ENCODE measurements at regions of chr11 and their contacts with region 1.

Region 1: GRCh38 chr11:77820563-77821348 is at the starts of genes AAMDC and RSF1:
- DNase-seq: peak; percentile 97 to 99
- H3K4me3 ChIP-seq: peak within 1 kb of the TSS; percentile 91 to 100
- H3K27ac ChIP-seq: peak within 1 kb of the TSS; percentile 93 to 98
- H3K4me1 ChIP-seq: peaks cover 8 to 10% of the 10 kb centered on the region in 2 donors
- H3K27me3 ChIP-seq: no peaks in the 10 kb centered on the region
- CTCF ChIP-seq: peak; percentile 73 to 84 (median 76)
- POLR2A ChIP-seq: peak; percentile 79 to 93
- total RNA-seq, gene AAMDC: 10.9 to 31.5 (median 28.1) TPM
- total RNA-seq, gene RSF1: 26.5 to 121 (median 82.3) TPM

Region 2: GRCh38 chr11:77879218-77879617 is 58.5 kb after region 1 on chr11:
- intact Hi-C with region 1: no loop called
- DNase-seq: peak; percentile 47 to 57
- H3K4me3 ChIP-seq: no peak overlapping the region
- H3K27ac ChIP-seq: no peak overlapping the region
- H3K4me1 ChIP-seq: no peaks in the 10 kb centered on the region
- H3K27me3 ChIP-seq: no peaks in the 10 kb centered on the region
- CTCF ChIP-seq: peak in 1 of 4 experiments; percentile 6
- POLR2A ChIP-seq: no peak

Region 3: GRCh38 chr11:77994412-77995362 is 173.9 kb after region 1 on chr11 and contains the start of gene INTS4:
- intact Hi-C with region 1: loop called (anchors 5 kb)
- DNase-seq: peak; percentile 99
- H3K4me3 ChIP-seq: peak within 1 kb of the TSS; percentile 53 to 79
- H3K27ac ChIP-seq: peak within 1 kb of the TSS; percentile 80 to 85
- H3K4me1 ChIP-seq: no peaks in the 10 kb centered on the region
- H3K27me3 ChIP-seq: no peaks in the 10 kb centered on the region
- CTCF ChIP-seq: peak in 2 of 4 experiments; percentile 15 to 29
- POLR2A ChIP-seq: peak in 1 of 2 donors; percentile 46
- total RNA-seq, gene INTS4: 13.8 to 68.8 (median 45.7) TPM

Region 4: GRCh38 chr11:78350646-78351165 is 530.0 kb after region 1 on chr11:
- intact Hi-C with region 1: no loop called
- DNase-seq: no peak
- H3K4me3 ChIP-seq: peak overlapping the region in 1 of 2 donors; percentile 25
- H3K27ac ChIP-seq: peak overlapping the region; percentile 53 to 80
- H3K4me1 ChIP-seq: peaks cover 1 to 9% of the 10 kb centered on the region in 2 donors
- H3K27me3 ChIP-seq: no peaks in the 10 kb centered on the region
- CTCF ChIP-seq: no peak
- POLR2A ChIP-seq: no peak